MCF 10A (cell line): ENCODE measurements at regions of chr18 and their contacts with region 1.

Region 1: GRCh38 chr18:76565238-76566180 is 70.5 kb upstream of the ZNF516 start:
- DNase-seq: peak; percentile 95
- H3K4me3 Mint-ChIP-seq: peak overlapping the region; percentile 64
- H3K27ac Mint-ChIP-seq: peak overlapping the region; percentile 98
- H3K4me1 Mint-ChIP-seq: peaks cover 34% of the 10 kb centered on the region
- H3K27me3 Mint-ChIP-seq: no peaks in the 10 kb centered on the region
- CTCF ChIP-seq: no peak

Region 2: DNA sequence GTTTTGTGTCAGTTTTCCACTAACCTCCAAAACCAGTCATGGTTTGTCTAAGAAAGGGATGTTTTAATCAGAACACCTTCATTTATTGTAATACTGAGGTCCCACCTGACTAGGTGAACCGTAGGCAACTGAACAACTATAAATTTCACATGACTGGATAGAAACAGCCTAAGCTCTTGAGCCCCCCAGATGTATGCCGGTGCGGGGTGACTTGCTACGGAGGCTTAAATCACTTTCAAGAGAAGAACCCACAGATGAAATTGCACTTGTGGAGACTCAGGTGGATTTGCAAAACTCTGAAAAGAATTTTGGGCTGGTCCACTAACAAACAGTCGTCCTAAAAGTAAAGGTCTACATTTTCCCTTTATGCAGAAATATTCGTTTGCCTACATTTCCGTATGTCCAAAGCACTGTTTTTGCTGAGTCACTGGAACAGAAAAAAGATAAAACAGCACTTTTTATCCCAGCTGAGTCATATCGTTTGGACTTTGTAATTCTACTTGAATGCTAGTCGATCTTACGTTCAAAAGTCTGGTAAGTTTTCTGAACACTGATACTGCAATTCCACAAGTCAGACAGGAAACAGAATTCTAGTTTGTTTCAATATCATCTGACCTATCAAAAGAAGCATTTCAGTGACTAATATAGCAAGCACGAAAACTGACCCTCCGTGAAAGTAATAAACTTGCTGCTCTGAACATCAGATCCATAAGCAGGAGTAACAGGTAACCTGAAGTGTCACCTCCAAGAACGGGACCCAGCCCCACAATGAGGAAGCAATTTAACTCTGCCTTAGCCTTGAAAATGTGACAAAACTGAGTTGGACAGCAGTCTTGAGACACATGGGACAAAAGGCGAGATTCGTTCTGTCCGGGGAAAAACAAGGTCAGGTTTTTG is 88.6 kb before region 1 on chr18:
- CTCF ChIA-PET with region 1: no interaction called
- POLR2A ChIA-PET with region 1: interaction called, 12 read pairs
- intact Hi-C with region 1: no loop called
- DNase-seq: peak; percentile 60
- H3K4me3 Mint-ChIP-seq: peak overlapping the region; percentile 62
- H3K27ac Mint-ChIP-seq: peak overlapping the region; percentile 74
- H3K4me1 Mint-ChIP-seq: peaks cover 32% of the 10 kb centered on the region
- H3K27me3 Mint-ChIP-seq: no peaks in the 10 kb centered on the region
- CTCF ChIP-seq: no peak

Region 3: DNA sequence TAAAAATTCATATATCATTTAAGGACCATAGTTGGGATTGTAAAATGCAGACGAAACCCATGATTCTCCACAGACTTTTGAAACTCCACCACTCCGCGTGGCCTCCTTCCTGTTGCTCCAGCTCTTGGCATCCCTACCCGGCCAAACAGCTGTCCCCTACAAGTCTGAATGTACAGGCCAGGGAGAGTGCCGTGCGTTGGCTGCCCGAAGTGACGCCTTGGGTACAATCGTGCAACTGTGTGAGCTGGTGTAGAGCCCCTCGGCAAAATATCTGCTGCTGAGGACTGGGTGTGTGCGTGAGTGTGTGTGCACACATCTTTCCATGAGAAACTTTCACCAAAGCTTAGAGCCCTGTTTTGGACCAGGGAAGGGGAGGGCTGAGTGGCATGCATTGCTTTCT is 26.7 kb before region 1 on chr18:
- CTCF ChIA-PET with region 1: no interaction called
- POLR2A ChIA-PET with region 1: no interaction called
- intact Hi-C with region 1: no loop called
- DNase-seq: no peak
- H3K4me3 Mint-ChIP-seq: no peak overlapping the region
- H3K27ac Mint-ChIP-seq: no peak overlapping the region
- H3K4me1 Mint-ChIP-seq: no peaks in the 10 kb centered on the region
- H3K27me3 Mint-ChIP-seq: no peaks in the 10 kb centered on the region
- CTCF ChIP-seq: no peak

Region 4: GRCh38 chr18:76553715-76554546 is 11.6 kb before region 1 on chr18:
- CTCF ChIA-PET with region 1: no interaction called
- POLR2A ChIA-PET with region 1: interaction called, 25 read pairs
- intact Hi-C with region 1: no loop called
- DNase-seq: peak; percentile 85
- H3K4me3 Mint-ChIP-seq: no peak overlapping the region
- H3K27ac Mint-ChIP-seq: no peak overlapping the region
- H3K4me1 Mint-ChIP-seq: peaks cover 20% of the 10 kb centered on the region
- H3K27me3 Mint-ChIP-seq: no peaks in the 10 kb centered on the region
- CTCF ChIP-seq: no peak